Activated CD4-positive, alpha-beta memory T cell treated with anti-CD3 and anti-CD28 coated beads for 36 hours (primary cell): ENCODE measurements at regions of chr3 and their contacts with region 1.

Region 1: GRCh38 chr3:186821429-186822367 is 15.4 kb upstream of the RFC4 start:
- DNase-seq: no peak
- H3K4me3 Mint-ChIP-seq: no peak overlapping the region
- H3K27ac Mint-ChIP-seq: no peak overlapping the region
- H3K4me1 Mint-ChIP-seq: peaks cover 22% of the 10 kb centered on the region
- H3K27me3 Mint-ChIP-seq: peaks cover 10% of the 10 kb centered on the region

Region 2: GRCh38 chr3:186790261-186790981 is 31.3 kb before region 1 on chr3:
- CTCF ChIA-PET with region 1: no interaction called
- POLR2A ChIA-PET with region 1: interaction called, 5 read pairs
- intact Hi-C with region 1: loop called (anchors 5 kb)
- DNase-seq: no peak
- H3K4me3 Mint-ChIP-seq: peak overlapping the region; percentile 2
- H3K27ac Mint-ChIP-seq: peak overlapping the region; percentile 67
- H3K4me1 Mint-ChIP-seq: peaks cover 42% of the 10 kb centered on the region
- H3K27me3 Mint-ChIP-seq: no peaks in the 10 kb centered on the region

Region 3: DNA sequence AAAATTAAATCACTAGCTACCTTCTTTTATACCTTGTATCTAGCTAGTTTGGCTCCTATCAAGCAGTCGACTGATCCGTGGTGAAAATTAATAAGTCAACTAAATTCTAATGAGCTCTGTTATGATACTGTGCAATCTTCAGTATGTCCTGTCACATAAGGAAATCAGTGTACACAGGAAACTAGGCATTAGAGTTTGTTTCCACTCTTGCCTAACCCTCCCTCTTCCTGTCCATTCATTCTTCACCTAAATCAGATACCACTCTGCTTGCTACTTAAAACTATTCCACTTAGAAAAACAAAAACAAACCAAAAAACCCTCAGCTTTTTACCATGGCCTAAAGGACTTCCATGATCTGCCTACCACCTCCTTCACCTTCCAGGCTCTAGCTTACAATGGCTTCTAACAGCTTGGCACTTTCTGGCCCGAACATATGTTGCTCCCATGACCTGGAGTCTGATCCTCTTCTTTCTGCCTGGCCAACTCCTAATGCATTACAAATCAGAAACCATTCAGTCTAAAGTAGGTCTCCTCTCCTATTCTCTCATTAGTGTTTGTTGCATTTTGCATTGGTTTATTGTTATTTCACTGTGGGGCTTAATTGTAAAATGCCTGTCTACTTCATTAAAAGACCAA is 23.3 kb before region 1 on chr3:
- CTCF ChIA-PET with region 1: interaction called, 10 read pairs
- POLR2A ChIA-PET with region 1: interaction called, 4 read pairs
- intact Hi-C with region 1: no loop called
- DNase-seq: no peak
- H3K4me3 Mint-ChIP-seq: no peak overlapping the region
- H3K27ac Mint-ChIP-seq: no peak overlapping the region
- H3K4me1 Mint-ChIP-seq: peaks cover 20% of the 10 kb centered on the region
- H3K27me3 Mint-ChIP-seq: no peaks in the 10 kb centered on the region

Region 4: GRCh38 chr3:186806089-186807055 is 15.3 kb before region 1 on chr3 and contains the start of gene RFC4:
- CTCF ChIA-PET with region 1: interaction called, 31 read pairs
- POLR2A ChIA-PET with region 1: interaction called, 9 read pairs
- intact Hi-C with region 1: no loop called
- DNase-seq: peak; percentile 91
- H3K4me3 Mint-ChIP-seq: peak within 1 kb of the TSS; percentile 93
- H3K27ac Mint-ChIP-seq: peak within 1 kb of the TSS; percentile 93
- H3K4me1 Mint-ChIP-seq: peaks cover 24% of the 10 kb centered on the region
- H3K27me3 Mint-ChIP-seq: no peaks in the 10 kb centered on the region
- total RNA-seq, gene RFC4: 118 to 127 TPM